GM18951 (cell line): ENCODE measurements at regions of chr22 and their contacts with region 1.

Region 1: GRCh38 chr22:44995105-44995514 is 14.7 kb downstream of the PHF21B start:
- POLR2A ChIP-seq: no peak

Region 2: GRCh38 chr22:43313244-43313889 is 1681.7 kb before region 1 on chr22:
- in situ Hi-C with region 1: loop called (anchors 10 kb)
- POLR2A ChIP-seq: no peak